ENCODE measurements at regions of chr9 and their contacts with region 1.

Region 1: GRCh38 chr9:136928591-136928990 is 15.9 kb downstream of the FBXW5 start:
- DNase-seq: no peak
- H3K4me3 ChIP-seq: no peak overlapping the region
- H3K27ac ChIP-seq: no peak overlapping the region
- H3K4me1 ChIP-seq: no peaks in the 10 kb centered on the region
- H3K27me3 ChIP-seq: no peaks in the 10 kb centered on the region
- CTCF ChIP-seq: no peak
- EP300 ChIP-seq: no peak
- POLR2A ChIP-seq: no peak

Region 2: GRCh38 chr9:136865735-136866103 is 62.9 kb before region 1 on chr9:
- intact Hi-C with region 1: loop called in 1 of 4 experiments (anchors 2 kb)
- DNase-seq: peak in 4 of 5 donors; percentile 44 to 68 (median 56)
- H3K4me3 ChIP-seq: peak overlapping the region; percentile 99
- H3K27ac ChIP-seq: peak overlapping the region; percentile 61 to 65
- H3K4me1 ChIP-seq: peaks cover 8% of the 10 kb centered on the region
- H3K27me3 ChIP-seq: no peaks in the 10 kb centered on the region
- CTCF ChIP-seq: no peak
- EP300 ChIP-seq: no peak
- POLR2A ChIP-seq: no peak

Region 3: DNA sequence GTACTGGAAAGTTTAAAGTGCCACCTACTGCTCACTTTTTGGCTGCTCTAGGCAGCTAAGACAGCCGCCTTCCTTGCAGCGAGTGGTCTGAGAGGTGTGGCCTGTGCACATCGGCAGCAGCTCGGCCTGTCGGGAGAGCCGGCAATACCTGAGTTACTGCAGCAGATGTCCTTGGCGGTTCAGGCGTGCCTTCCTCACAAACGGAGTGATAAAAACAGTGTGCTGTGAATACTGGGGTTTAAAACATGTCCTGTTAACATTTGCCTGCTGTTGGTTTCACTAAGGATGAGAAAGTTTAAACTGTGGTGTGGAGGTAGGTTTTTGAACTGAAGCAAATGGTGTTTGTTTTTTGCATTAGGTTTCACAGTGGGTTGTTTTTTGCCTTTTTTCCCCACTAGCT is 29.4 kb before region 1 on chr9:
- intact Hi-C with region 1: loop called in 1 of 4 experiments (anchors 5 kb)
- DNase-seq: no peak
- H3K4me3 ChIP-seq: no peak overlapping the region
- H3K27ac ChIP-seq: no peak overlapping the region
- H3K4me1 ChIP-seq: peaks cover 4% of the 10 kb centered on the region
- H3K27me3 ChIP-seq: no peaks in the 10 kb centered on the region
- CTCF ChIP-seq: no peak
- EP300 ChIP-seq: no peak
- POLR2A ChIP-seq: no peak